ENCODE measurements at regions of chr16 and their contacts with region 1.

Region 1: GRCh38 chr16:13702614-13703013 is 217.3 kb upstream of the ERCC4 start:
- DNase-seq: no peak

Region 2: DNA sequence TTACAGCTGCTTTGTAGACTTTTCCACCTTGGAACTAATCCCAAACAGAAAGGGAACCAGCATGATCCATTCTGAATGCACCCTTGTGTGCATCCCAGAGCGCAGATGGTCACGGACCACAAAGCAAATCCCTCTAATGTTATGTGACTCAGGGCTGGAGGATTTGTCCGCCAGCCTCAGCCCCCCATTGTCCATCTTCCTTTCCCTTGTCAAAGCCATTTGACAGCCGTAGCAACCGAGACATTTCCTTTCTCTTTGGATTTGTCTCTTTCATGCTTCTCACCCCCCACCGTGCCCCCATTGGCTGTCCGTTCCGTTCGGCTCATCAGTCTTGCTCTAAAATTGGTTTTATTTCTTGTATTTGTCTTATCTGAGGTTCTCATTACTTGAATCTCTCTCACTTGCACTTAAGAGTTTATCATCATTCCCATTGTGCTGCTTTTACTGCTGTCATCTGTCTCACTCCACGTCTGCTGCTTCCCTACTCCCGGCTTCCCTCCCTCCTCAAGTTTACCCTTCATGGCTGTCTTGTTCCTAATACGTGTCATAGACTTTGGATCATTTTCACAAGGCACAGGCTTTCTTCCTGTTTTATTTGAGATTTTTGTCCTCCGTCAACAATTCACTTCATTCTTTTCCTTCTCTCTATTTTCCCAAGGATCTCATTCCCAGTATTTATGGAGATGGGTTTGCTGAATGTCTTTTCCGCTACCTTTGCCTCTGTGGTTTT is 54.0 kb after region 1 on chr16:
- intact Hi-C with region 1: loop called in 1 of 2 experiments (anchors 2 kb)
- DNase-seq: no peak

Region 3: DNA sequence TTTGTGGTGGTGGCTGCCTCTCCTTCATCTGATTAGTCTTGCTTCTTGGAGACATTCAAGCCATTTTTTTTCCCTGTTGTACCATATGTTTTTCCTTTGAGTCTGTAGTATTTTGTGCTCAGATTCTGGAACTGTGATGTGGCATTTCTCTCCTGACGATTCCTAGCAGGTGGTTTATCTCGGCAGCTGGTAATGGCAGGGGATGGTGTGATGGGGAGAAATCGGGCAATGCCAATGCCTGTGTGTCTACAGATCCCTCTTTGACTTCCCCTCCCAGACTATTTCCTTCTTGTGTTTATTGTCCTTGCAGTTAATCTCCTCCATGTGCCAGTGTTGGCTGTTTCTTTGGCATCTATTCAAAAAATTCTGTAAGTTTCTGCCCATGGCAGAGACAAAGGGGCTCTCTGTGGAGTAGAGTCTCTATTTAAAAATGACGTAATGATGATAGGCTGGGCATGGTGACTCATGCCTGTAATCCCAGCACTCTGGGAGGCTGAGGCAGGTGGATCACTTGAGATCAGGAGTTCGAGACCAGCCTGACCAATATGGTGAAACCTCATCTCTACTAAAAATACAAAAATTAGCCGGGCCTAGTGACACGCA is 127.2 kb after region 1 on chr16:
- intact Hi-C with region 1: no loop called
- DNase-seq: no peak

Region 4: GRCh38 chr16:13848795-13849194 is 146.2 kb after region 1 on chr16:
- intact Hi-C with region 1: no loop called
- DNase-seq: no peak